SK-N-SH (cell line): ENCODE measurements at regions of chr9 and their contacts with region 1.

Region 1: GRCh38 chr9:131334629-131335367 is 45.3 kb downstream of the PLPP7 start:
- DNase-seq: no peak
- H3K4me3 ChIP-seq: no peak overlapping the region
- H3K27ac ChIP-seq: no peak overlapping the region
- H3K4me1 ChIP-seq: peaks cover 0 to 6% of the 10 kb centered on the region in 2 experiments; a peak in 1 of 4 replicates
- H3K27me3 ChIP-seq: no peaks in the 10 kb centered on the region
- CTCF ChIP-seq: no peak
- EP300 ChIP-seq: no peak
- RAD21 ChIP-seq: no peak

Region 2: GRCh38 chr9:130626249-130626992 is 708.4 kb before region 1 on chr9:
- CTCF ChIA-PET with region 1: no interaction called
- POLR2A ChIA-PET with region 1: no interaction called
- DNase-seq: no peak
- H3K4me3 ChIP-seq: no peak overlapping the region
- H3K27ac ChIP-seq: no peak overlapping the region
- H3K4me1 ChIP-seq: no peaks in the 10 kb centered on the region
- H3K27me3 ChIP-seq: no peaks in the 10 kb centered on the region
- CTCF ChIP-seq: no peak
- EP300 ChIP-seq: no peak
- RAD21 ChIP-seq: no peak

Region 3: DNA sequence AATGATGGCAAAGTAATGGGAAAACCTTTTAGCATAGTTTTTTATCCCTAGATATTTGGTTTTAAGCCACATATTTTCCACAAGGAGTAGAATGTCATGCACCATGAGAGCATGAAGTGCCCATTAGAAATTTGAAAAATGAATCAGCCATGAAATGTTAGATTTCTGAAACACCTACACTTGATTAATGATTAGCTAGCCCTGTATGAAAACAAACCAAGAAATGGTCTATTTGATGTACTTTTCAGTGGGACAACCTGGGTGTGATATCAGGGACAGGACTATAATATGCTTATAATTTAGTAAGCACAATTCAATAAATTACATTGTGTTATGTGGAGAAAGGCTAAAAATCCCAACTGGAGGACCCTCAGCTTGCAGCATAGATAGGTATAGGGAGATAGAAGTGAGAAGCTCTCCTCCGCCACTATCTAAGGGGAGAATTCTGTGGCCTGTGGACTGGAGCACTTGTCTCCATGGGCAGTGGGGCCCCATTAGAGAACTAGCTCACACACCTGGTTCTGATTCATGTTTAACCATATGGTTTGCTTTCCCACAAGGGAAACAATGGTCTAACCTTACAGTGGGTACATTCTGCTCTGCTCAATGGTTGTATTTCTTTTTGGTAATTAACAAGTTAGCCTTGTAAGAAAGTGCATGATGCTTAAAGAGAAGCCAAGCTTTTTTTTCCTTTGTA is 174.2 kb before region 1 on chr9:
- CTCF ChIA-PET with region 1: interaction called, 29 read pairs
- POLR2A ChIA-PET with region 1: interaction called, 4 read pairs
- DNase-seq: no peak
- H3K4me3 ChIP-seq: no peak overlapping the region
- H3K27ac ChIP-seq: no peak overlapping the region
- H3K4me1 ChIP-seq: no peaks in the 10 kb centered on the region
- H3K27me3 ChIP-seq: no peaks in the 10 kb centered on the region
- CTCF ChIP-seq: no peak
- EP300 ChIP-seq: no peak
- RAD21 ChIP-seq: no peak

Region 4: DNA sequence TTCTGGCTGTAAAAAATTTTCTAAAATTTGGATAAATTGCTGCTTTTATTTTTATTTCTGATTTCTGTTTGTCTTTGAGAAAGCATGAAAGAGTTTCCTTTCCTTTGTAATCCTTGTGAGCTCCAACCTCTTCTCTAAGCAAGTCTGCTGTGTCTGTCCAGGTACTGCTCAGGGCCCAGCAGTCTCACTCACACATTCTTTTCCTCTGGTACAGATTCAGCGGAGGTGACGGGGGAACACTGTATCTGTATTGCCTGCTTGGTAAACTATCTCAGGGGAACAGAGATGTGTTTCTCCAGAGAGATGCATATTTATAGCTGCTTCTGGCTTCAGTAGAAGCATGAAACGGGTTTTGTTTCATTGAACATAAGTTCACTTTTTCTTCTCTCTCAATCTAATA is 148.9 kb before region 1 on chr9:
- CTCF ChIA-PET with region 1: interaction called, 192 read pairs
- POLR2A ChIA-PET with region 1: no interaction called
- DNase-seq: no peak
- H3K4me3 ChIP-seq: no peak overlapping the region
- H3K27ac ChIP-seq: no peak overlapping the region
- H3K4me1 ChIP-seq: peaks cover 0 to 2% of the 10 kb centered on the region in 2 experiments; a peak in 1 of 4 replicates
- H3K27me3 ChIP-seq: no peaks in the 10 kb centered on the region
- CTCF ChIP-seq: no peak
- EP300 ChIP-seq: no peak
- RAD21 ChIP-seq: no peak

Region 5: GRCh38 chr9:131203431-131204218 is 131.2 kb before region 1 on chr9:
- CTCF ChIA-PET with region 1: interaction called, 28 read pairs
- POLR2A ChIA-PET with region 1: no interaction called
- DNase-seq: no peak
- H3K4me3 ChIP-seq: no peak overlapping the region
- H3K27ac ChIP-seq: no peak overlapping the region
- H3K4me1 ChIP-seq: no peaks in the 10 kb centered on the region
- H3K27me3 ChIP-seq: no peaks in the 10 kb centered on the region
- CTCF ChIP-seq: peak; percentile 33
- EP300 ChIP-seq: no peak
- RAD21 ChIP-seq: no peak

Region 6: DNA sequence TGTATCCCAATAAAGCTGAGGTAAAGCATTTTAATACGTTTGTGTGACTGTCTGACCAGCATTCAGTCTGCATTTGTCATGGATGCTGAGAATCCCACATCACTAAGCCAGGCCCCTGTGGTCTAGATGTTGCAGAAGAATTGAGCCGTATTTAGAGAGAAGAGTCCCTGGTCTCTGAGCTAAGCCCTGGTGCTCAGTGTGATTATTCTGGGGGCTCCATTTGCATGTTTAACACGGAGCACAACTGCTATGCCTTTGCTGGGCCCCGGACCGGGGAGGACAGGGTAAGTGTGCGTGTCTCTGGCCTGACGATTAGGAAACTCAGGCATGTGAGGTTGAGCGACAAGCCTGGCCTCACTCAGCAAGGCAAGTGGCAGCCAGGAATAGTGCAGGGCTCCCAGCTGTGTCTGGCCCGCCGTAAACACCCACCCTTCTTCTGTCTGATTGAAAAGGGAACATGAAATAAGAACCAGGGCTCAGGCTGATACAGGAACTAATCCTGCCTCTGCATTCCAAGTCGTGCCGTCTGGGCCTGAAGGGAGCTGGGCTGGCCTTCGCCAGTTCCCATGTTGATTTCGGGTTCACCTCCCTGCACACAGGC is 80.8 kb before region 1 on chr9:
- CTCF ChIA-PET with region 1: interaction called, 10 read pairs
- POLR2A ChIA-PET with region 1: no interaction called
- DNase-seq: no peak
- H3K4me3 ChIP-seq: no peak overlapping the region
- H3K27ac ChIP-seq: no peak overlapping the region
- H3K4me1 ChIP-seq: peaks cover 5 to 11% of the 10 kb centered on the region in 2 experiments; a peak in 2 of 4 replicates
- H3K27me3 ChIP-seq: no peaks in the 10 kb centered on the region
- CTCF ChIP-seq: no peak
- EP300 ChIP-seq: no peak
- RAD21 ChIP-seq: no peak

Region 7: GRCh38 chr9:131307974-131308373 is 26.8 kb before region 1 on chr9:
- CTCF ChIA-PET with region 1: interaction called, 11 read pairs
- POLR2A ChIA-PET with region 1: no interaction called
- DNase-seq: no peak
- H3K4me3 ChIP-seq: no peak overlapping the region
- H3K27ac ChIP-seq: no peak overlapping the region
- H3K4me1 ChIP-seq: peaks cover 0 to 7% of the 10 kb centered on the region in 2 experiments; a peak in 1 of 4 replicates
- H3K27me3 ChIP-seq: no peaks in the 10 kb centered on the region
- CTCF ChIP-seq: no peak
- EP300 ChIP-seq: no peak
- RAD21 ChIP-seq: no peak

Region 8: GRCh38 chr9:131478421-131478868 is 143.6 kb after region 1 on chr9:
- CTCF ChIA-PET with region 1: interaction called, 13 read pairs
- POLR2A ChIA-PET with region 1: no interaction called
- DNase-seq: peak; percentile 86
- H3K4me3 ChIP-seq: no peak overlapping the region
- H3K27ac ChIP-seq: no peak overlapping the region
- H3K4me1 ChIP-seq: no peaks in the 10 kb centered on the region; a peak in 1 of 4 replicates
- H3K27me3 ChIP-seq: no peaks in the 10 kb centered on the region
- CTCF ChIP-seq: peak; percentile 71
- EP300 ChIP-seq: no peak
- RAD21 ChIP-seq: peak; percentile 49

Region 9: GRCh38 chr9:131500939-131501541 is 166.2 kb after region 1 on chr9:
- CTCF ChIA-PET with region 1: no interaction called
- POLR2A ChIA-PET with region 1: no interaction called
- DNase-seq: no peak
- H3K4me3 ChIP-seq: no peak overlapping the region
- H3K27ac ChIP-seq: no peak overlapping the region
- H3K4me1 ChIP-seq: peaks cover 3 to 16% of the 10 kb centered on the region in 2 experiments; a peak in 1 of 4 replicates
- H3K27me3 ChIP-seq: no peaks in the 10 kb centered on the region
- CTCF ChIP-seq: no peak
- EP300 ChIP-seq: no peak
- RAD21 ChIP-seq: no peak

Region 10: DNA sequence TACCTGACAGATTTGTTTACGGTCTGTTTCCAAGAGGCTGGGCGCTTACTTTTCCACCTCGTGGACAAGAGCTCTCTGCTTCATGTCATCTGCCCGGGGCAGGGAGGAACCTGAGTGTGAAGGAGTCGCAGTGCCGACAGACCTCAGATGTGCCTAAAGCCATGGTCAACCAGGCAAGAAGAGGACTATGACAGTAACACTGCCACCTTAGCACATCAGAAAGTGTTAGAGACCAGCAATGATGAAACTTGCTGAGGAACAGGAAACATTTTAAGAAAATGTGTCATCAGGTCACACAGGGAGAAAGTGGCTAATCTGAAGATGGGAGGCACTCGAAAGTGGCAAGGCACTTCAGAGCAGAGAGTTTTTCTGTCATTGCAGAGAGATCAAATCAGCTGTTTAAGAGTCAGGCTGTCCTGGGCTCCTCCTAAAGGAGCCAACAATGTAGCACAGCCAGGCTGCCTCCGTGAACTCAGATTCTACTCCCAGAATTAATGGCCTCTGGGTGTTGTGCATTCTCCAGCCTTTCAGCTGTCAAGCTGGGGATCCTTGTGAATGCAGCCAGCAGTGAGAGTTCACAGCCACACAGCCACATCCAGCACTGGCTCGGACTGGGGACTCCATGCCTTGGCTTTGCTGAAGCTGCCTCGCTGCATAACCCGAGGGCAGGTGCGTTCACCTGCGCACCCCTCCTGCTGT is 310.4 kb after region 1 on chr9:
- CTCF ChIA-PET with region 1: no interaction called
- POLR2A ChIA-PET with region 1: no interaction called
- DNase-seq: no peak
- H3K4me3 ChIP-seq: no peak overlapping the region
- H3K27ac ChIP-seq: no peak overlapping the region
- H3K4me1 ChIP-seq: peaks cover 0 to 3% of the 10 kb centered on the region in 2 experiments; a peak in 1 of 4 replicates
- H3K27me3 ChIP-seq: no peaks in the 10 kb centered on the region
- CTCF ChIP-seq: no peak
- EP300 ChIP-seq: no peak
- RAD21 ChIP-seq: no peak

Region 11: DNA sequence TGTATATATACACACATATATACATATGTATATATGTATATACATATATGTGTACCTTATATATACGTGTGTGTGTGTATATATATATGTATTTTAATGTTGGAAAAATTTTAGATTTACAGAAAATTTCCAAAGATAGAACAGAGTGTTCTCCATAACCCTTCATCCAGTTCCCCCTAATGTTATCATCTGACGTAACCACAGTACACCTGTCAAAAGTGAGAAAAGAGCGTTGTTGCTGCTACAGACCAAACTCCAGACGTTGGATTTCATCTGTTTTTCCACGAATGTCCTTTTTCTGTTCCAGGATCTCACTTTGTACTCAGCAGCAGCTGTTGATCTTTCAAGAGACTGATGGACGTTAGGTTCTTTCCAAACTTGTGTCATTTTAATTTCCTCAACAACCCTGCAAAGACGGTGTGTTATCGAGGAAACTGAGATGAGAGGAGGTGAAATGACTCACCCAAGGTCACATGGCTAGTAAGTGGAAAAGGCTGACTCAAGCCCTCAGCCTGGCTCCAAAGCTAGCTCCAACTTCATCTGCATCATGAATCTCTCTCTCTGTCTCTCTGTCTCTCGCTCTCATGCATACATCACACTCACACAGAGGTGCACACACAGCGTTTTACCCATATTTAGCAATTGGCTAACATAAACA is 810.0 kb after region 1 on chr9:
- CTCF ChIA-PET with region 1: no interaction called
- POLR2A ChIA-PET with region 1: no interaction called
- DNase-seq: no peak
- H3K4me3 ChIP-seq: no peak overlapping the region
- H3K27ac ChIP-seq: no peak overlapping the region
- H3K4me1 ChIP-seq: peaks cover 0 to 12% of the 10 kb centered on the region in 2 experiments; a peak in 1 of 4 replicates
- H3K27me3 ChIP-seq: peaks cover 19% of the 10 kb centered on the region; the same call in 1 of the 2 replicates
- CTCF ChIP-seq: no peak
- EP300 ChIP-seq: no peak
- RAD21 ChIP-seq: no peak